GM12878 (cell line): ENCODE measurements at regions of chr1 and their contacts with region 1.

Region 1: GRCh38 chr1:59266180-59266926 is 30.5 kb upstream of the FGGY start:
- DNase-seq: peak; percentile 80
- ATAC-seq: peak; percentile 95
- H3K4me3 ChIP-seq: no peak overlapping the region
- H3K27ac ChIP-seq: peak overlapping the region; percentile 64
- H3K4me1 ChIP-seq: peaks cover 16% of the 10 kb centered on the region
- H3K27me3 ChIP-seq: no peaks in the 10 kb centered on the region
- CTCF ChIP-seq: no peak
- EP300 ChIP-seq: peak; percentile 60 to 67; a peak in 2 of 4 replicates
- POLR2A ChIP-seq: no peak
- RAD21 ChIP-seq: no peak

Region 2: GRCh38 chr1:59279648-59280047 is 13.3 kb after region 1 on chr1:
- CTCF ChIA-PET with region 1: interaction called, 11 read pairs
- POLR2A ChIA-PET with region 1: no interaction called
- RAD21 ChIA-PET with region 1: interaction called, 3 read pairs
- SMC1A ChIA-PET with region 1: interaction called, 7 read pairs
- in situ Hi-C with region 1: no loop called
- intact Hi-C with region 1: no loop called
- DNase-seq: no peak
- ATAC-seq: no peak
- H3K4me3 ChIP-seq: no peak overlapping the region
- H3K27ac ChIP-seq: no peak overlapping the region
- H3K4me1 ChIP-seq: no peaks in the 10 kb centered on the region; the same call in 1 of the 2 replicates
- H3K27me3 ChIP-seq: no peaks in the 10 kb centered on the region; a peak in 1 of 4 replicates
- CTCF ChIP-seq: no peak
- EP300 ChIP-seq: no peak
- POLR2A ChIP-seq: no peak
- RAD21 ChIP-seq: no peak

Region 3: DNA sequence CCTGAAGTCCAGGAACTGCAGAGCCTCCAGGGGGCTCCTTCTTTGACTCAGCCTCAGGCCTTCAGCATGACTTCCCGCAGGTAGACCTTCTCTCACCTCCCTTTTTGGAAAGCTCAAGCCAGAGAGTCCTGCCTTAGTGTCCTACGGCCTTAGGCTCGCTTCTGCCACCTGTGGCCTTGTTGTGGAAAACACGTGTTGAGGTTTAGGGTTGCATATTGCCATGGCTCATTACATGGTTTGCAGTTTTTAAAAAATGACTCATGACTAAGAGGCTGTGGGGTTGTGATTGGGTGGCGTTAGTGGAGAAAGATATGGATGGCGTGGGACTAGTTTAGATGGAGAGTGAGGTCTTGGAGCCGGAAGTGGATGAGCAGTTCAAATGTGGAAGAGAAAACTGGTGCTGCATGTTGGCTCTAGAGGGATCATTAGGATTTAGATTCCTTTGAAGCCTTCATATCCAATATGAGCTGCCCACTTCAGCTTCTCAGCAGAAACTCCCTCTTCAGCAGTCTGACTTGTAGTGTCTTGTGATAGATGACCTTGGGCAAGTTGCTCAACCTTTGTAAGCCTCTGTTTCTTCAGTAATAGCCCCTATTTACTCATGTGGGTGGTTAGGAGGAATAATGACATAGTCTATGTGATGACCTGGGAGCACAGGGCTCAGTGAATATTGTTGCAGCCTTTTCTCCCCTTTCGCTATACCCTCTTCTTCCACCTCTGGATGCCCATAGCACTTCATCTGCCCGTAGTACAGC is 24.0 kb after region 1 on chr1:
- CTCF ChIA-PET with region 1: interaction called, 6 read pairs
- POLR2A ChIA-PET with region 1: no interaction called
- RAD21 ChIA-PET with region 1: no interaction called
- SMC1A ChIA-PET with region 1: interaction called, 10 read pairs
- in situ Hi-C with region 1: no loop called
- intact Hi-C with region 1: no loop called
- DNase-seq: no peak
- ATAC-seq: peak; percentile 90
- H3K4me3 ChIP-seq: no peak overlapping the region
- H3K27ac ChIP-seq: no peak overlapping the region
- H3K4me1 ChIP-seq: no peaks in the 10 kb centered on the region
- H3K27me3 ChIP-seq: no peaks in the 10 kb centered on the region
- CTCF ChIP-seq: peak; percentile 47 to 62 (median 50)
- EP300 ChIP-seq: no peak
- POLR2A ChIP-seq: no peak
- RAD21 ChIP-seq: peak; percentile 75

Region 4: DNA sequence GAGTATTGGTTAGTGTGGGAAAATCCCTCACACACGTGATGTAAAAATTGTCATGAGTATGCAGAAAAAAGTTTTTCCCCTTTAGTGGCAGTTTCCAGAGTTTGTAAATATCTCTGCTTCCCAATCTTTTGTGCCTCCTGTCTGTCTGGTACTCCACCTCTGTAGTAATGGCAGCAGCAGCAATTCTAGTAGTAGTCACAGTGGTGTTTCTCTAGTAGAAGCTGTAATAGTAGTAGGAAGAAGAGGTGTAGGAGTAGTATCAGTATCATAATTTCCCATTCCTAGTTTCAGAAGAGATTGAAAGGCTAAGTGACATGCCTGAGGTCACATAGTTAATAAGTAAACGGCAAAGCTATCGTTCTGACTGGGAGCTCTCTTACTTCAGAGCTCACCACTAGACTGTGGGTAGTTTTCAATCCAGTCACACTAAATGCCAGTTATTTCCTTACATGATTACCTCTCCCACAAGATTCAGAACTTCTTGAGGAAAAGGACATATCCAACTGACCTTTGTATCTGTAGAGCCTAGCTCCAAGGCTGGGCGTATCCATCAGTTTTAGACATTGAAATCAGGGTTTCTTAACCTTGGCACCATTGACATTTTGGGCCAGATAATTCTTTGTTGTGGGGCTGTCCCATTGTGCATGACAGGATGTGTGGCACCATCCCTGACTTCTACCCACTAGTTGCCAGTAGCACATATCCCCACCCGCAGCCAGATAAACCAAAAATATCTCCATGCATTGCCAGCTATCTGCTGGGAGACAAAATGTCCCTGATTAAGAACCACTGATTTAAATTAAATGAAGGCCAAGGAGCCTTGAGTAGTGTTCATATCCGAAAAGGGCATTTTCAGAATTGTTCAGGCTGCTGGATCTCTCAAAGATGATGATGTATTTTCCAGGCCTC is 166.4 kb after region 1 on chr1:
- CTCF ChIA-PET with region 1: no interaction called
- POLR2A ChIA-PET with region 1: no interaction called
- RAD21 ChIA-PET with region 1: interaction called, 10 read pairs
- SMC1A ChIA-PET with region 1: no interaction called
- in situ Hi-C with region 1: no loop called
- intact Hi-C with region 1: no loop called
- DNase-seq: peak; percentile 69
- ATAC-seq: peak; percentile 96
- H3K4me3 ChIP-seq: no peak overlapping the region
- H3K27ac ChIP-seq: peak overlapping the region; percentile 53; the same call in 1 of the 2 replicates
- H3K4me1 ChIP-seq: peaks cover 16% of the 10 kb centered on the region
- H3K27me3 ChIP-seq: no peaks in the 10 kb centered on the region
- CTCF ChIP-seq: no peak
- EP300 ChIP-seq: peak; percentile 83 to 89; a peak in 3 of 4 replicates
- POLR2A ChIP-seq: no peak
- RAD21 ChIP-seq: no peak